A549 (cell line): ENCODE measurements at regions of chr14 and their contacts with region 1.

Region 1: GRCh38 chr14:54566410-54567223 is at the start of gene SAMD4A:
- DNase-seq: peak; percentile 68 to 88
- ATAC-seq: peak; percentile 60 to 71
- H3K4me3 ChIP-seq: peak within 1 kb of the TSS; percentile 75
- H3K27ac ChIP-seq: peak within 1 kb of the TSS; percentile 88 to 98
- H3K4me1 ChIP-seq: peaks cover 35% of the 10 kb centered on the region
- CTCF ChIP-seq: peak; percentile 33
- EP300 ChIP-seq: no peak
- POLR2A ChIP-seq: peak; percentile 21; the same call in 1 of the 2 replicates
- RAD21 ChIP-seq: peak; percentile 52 to 60
- polyA plus RNA-seq, gene SAMD4A: 3.9 and 5.3 TPM in 2 replicates

Region 2: GRCh38 chr14:54577977-54578376 is 11.4 kb after region 1 on chr14:
- CTCF ChIA-PET with region 1: interaction called, 13 read pairs
- POLR2A ChIA-PET with region 1: interaction called, 14 read pairs
- DNase-seq: peak; percentile 33 to 82
- ATAC-seq: peak; percentile 53 to 81; a peak in 5 of 6 replicates
- H3K4me3 ChIP-seq: no peak overlapping the region
- H3K27ac ChIP-seq: peak overlapping the region; percentile 20 to 68; a peak in 4 of 6 replicates
- H3K4me1 ChIP-seq: peaks cover 33% of the 10 kb centered on the region
- CTCF ChIP-seq: no peak
- EP300 ChIP-seq: no peak
- POLR2A ChIP-seq: no peak
- RAD21 ChIP-seq: no peak; a peak in 1 of 5 replicates

Region 3: GRCh38 chr14:54652188-54652587 is 85.6 kb after region 1 on chr14:
- CTCF ChIA-PET with region 1: interaction called, 12 read pairs
- POLR2A ChIA-PET with region 1: interaction called, 7 read pairs
- DNase-seq: peak; percentile 91 to 94
- ATAC-seq: peak; percentile 95 to 97
- H3K4me3 ChIP-seq: peak overlapping the region; percentile 37
- H3K27ac ChIP-seq: peak overlapping the region; percentile 86 to 88
- H3K4me1 ChIP-seq: peaks cover 52% of the 10 kb centered on the region
- CTCF ChIP-seq: no peak
- EP300 ChIP-seq: peak in 1 of 2 experiments; percentile 68; a peak in 1 of 5 replicates
- POLR2A ChIP-seq: no peak
- RAD21 ChIP-seq: peak in 1 of 2 experiments; percentile 15; a peak in 1 of 5 replicates

Region 4: GRCh38 chr14:54683882-54684794 is 117.5 kb after region 1 on chr14:
- CTCF ChIA-PET with region 1: interaction called, 150 read pairs
- POLR2A ChIA-PET with region 1: interaction called, 9 read pairs
- DNase-seq: no peak
- ATAC-seq: peak in 1 of 2 experiments; percentile 40; a peak in 2 of 6 replicates
- H3K4me3 ChIP-seq: no peak overlapping the region
- H3K27ac ChIP-seq: peak overlapping the region; percentile 57 to 80
- H3K4me1 ChIP-seq: peaks cover 39% of the 10 kb centered on the region
- CTCF ChIP-seq: no peak
- EP300 ChIP-seq: no peak
- POLR2A ChIP-seq: no peak
- RAD21 ChIP-seq: no peak

Region 5: GRCh38 chr14:54722781-54723432 is 156.3 kb after region 1 on chr14:
- CTCF ChIA-PET with region 1: interaction called, 20 read pairs
- POLR2A ChIA-PET with region 1: interaction called, 4 read pairs
- DNase-seq: peak; percentile 31 to 59
- ATAC-seq: peak; percentile 73 to 88; a peak in 5 of 6 replicates
- H3K4me3 ChIP-seq: no peak overlapping the region
- H3K27ac ChIP-seq: no peak overlapping the region
- H3K4me1 ChIP-seq: no peaks in the 10 kb centered on the region
- CTCF ChIP-seq: peak; percentile 49
- EP300 ChIP-seq: no peak
- POLR2A ChIP-seq: no peak
- RAD21 ChIP-seq: peak; percentile 61 to 73